ENCODE measurements at regions of chr11 and their contacts with region 1.

Region 1: GRCh38 chr11:122781378-122782195 is 56.7 kb upstream of the CRTAM start:
- DNase-seq: peak; percentile 80
- ATAC-seq: peak; percentile 89
- H3K4me3 Mint-ChIP-seq: no peak overlapping the region
- H3K27ac Mint-ChIP-seq: no peak overlapping the region
- H3K4me1 Mint-ChIP-seq: peaks cover 33% of the 10 kb centered on the region
- H3K27me3 Mint-ChIP-seq: no peaks in the 10 kb centered on the region

Region 2: GRCh38 chr11:122578168-122578825 is 203.3 kb before region 1 on chr11:
- CTCF ChIA-PET with region 1: interaction called, 20 read pairs
- POLR2A ChIA-PET with region 1: no interaction called
- DNase-seq: no peak
- ATAC-seq: no peak
- H3K4me3 Mint-ChIP-seq: no peak overlapping the region
- H3K27ac Mint-ChIP-seq: no peak overlapping the region
- H3K4me1 Mint-ChIP-seq: peaks cover 12% of the 10 kb centered on the region
- H3K27me3 Mint-ChIP-seq: peaks cover 6% of the 10 kb centered on the region

Region 3: GRCh38 chr11:122808478-122808869 is 26.9 kb after region 1 on chr11:
- CTCF ChIA-PET with region 1: interaction called, 19 read pairs
- POLR2A ChIA-PET with region 1: no interaction called
- DNase-seq: no peak
- ATAC-seq: no peak
- H3K4me3 Mint-ChIP-seq: no peak overlapping the region
- H3K27ac Mint-ChIP-seq: peak overlapping the region; percentile 58
- H3K4me1 Mint-ChIP-seq: peaks cover 64% of the 10 kb centered on the region
- H3K27me3 Mint-ChIP-seq: no peaks in the 10 kb centered on the region